ENCODE measurements at regions of chr1 and their contacts with region 1.

Region 1: GRCh38 chr1:110209715-110210603 is at the start of gene KCNC4:
- DNase-seq: peak; percentile 36
- H3K4me3 ChIP-seq: peak within 1 kb of the TSS; percentile 52
- H3K27me3 ChIP-seq: no peaks in the 10 kb centered on the region
- CTCF ChIP-seq: no peak
- polyA plus RNA-seq, gene KCNC4: 1.6 and 2.6 TPM in 2 replicates

Region 2: DNA sequence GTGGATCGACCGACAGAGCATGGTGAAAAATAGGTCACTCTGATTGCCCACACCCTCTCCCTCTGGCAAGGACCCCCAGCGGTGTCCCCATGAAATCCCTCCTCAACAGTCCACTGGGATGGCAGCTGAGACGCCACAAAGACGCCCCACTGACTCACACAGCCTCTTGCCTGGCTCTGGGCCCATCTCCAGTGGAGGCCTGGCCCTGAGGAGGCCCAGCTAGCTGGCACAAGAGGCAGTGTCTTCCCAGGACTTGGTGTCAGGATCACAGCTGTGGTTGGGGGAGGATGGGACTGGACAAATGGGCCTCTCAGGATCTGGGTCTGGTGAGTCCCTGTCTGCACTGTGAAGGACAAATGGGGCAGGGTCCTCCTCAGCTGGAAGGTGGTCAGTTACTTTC is 144.1 kb before region 1 on chr1:
- CTCF ChIA-PET with region 1: no interaction called
- POLR2A ChIA-PET with region 1: no interaction called
- DNase-seq: no peak
- H3K4me3 ChIP-seq: no peak overlapping the region
- H3K27me3 ChIP-seq: peaks cover 19% of the 10 kb centered on the region
- CTCF ChIP-seq: no peak

Region 3: GRCh38 chr1:110196917-110197765 is 12.8 kb before region 1 on chr1:
- CTCF ChIA-PET with region 1: interaction called, 31 read pairs
- POLR2A ChIA-PET with region 1: no interaction called
- DNase-seq: no peak
- H3K4me3 ChIP-seq: no peak overlapping the region
- H3K27me3 ChIP-seq: no peaks in the 10 kb centered on the region
- CTCF ChIP-seq: peak; percentile 98

Region 4: DNA sequence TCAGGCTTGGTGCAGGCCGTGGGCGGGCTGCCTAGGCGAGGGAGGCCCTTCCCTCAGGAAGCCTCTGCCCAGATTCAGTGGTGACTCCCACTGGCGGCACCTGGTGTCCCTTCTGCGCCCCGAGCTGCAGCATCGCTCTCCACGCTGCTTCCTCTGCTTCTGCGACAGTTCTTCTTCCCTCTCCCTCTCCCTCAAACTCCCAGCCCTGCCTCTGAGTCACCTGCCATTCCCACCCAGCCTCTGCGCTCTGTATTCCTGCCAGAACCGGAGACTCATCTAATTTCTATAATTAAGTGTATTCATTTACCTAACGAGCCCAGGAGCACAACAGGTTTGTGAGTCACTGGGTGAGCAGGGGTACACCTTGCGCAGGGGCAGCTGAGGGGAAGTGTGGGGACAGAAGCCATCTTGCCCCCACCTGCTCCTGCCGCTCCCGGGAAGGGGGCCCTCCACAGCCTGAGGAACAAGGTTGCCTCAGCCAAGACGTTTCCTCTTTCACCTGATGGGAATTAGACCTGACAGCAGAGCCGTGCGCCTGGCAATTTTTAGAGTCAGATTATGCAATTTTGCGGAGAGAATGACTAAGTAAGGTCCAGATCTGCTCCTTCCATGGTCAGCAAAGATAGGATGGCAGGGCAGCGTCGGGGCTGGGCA is 19.5 kb after region 1 on chr1:
- CTCF ChIA-PET with region 1: interaction called, 12 read pairs
- POLR2A ChIA-PET with region 1: no interaction called
- DNase-seq: no peak
- H3K4me3 ChIP-seq: no peak overlapping the region
- H3K27me3 ChIP-seq: no peaks in the 10 kb centered on the region
- CTCF ChIP-seq: no peak

Region 5: DNA sequence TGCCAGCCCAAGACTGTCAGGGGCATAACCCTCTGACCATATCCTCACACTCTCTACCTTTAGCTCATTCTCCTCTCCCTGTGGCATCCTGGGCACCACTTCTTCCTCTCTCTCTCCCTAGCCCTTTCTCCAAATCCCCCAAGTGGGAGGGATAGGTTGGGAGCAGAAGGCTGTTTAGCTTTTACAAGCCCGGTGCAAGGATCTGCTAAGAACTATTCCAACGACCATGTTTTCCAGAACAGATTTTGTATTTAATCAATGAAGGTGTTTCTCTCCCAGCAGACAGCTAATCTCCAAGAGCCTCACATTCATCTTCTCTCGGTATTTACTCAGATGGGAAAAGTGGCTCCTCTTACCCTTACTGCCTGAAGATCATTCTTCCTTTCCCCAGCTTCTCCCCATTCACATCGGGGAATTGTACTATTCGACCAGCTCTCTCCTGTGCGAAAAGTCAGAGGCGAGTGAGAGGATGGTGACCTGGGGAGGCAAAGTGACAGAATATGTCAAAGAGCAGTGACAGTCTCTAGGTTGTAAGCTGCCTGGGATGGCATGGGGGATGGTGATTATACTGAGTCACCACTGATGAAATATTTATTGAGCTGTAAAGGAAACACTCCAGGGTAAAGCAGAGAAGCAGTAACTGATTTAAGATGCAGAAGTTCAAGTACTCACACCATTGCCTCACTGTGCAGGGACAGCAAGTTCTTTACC is 82.2 kb after region 1 on chr1:
- CTCF ChIA-PET with region 1: interaction called, 1,014 read pairs
- POLR2A ChIA-PET with region 1: no interaction called
- DNase-seq: peak; percentile 48
- H3K4me3 ChIP-seq: no peak overlapping the region
- H3K27me3 ChIP-seq: no peaks in the 10 kb centered on the region
- CTCF ChIP-seq: no peak

Region 6: GRCh38 chr1:110319332-110320152 is 109.6 kb after region 1 on chr1:
- CTCF ChIA-PET with region 1: interaction called, 1,014 read pairs
- POLR2A ChIA-PET with region 1: no interaction called
- DNase-seq: no peak
- H3K4me3 ChIP-seq: no peak overlapping the region
- H3K27me3 ChIP-seq: no peaks in the 10 kb centered on the region
- CTCF ChIP-seq: no peak

Region 7: GRCh38 chr1:110407260-110408210 is 197.6 kb after region 1 on chr1 and contains the start of gene LAMTOR5:
- CTCF ChIA-PET with region 1: interaction called, 25 read pairs
- POLR2A ChIA-PET with region 1: interaction called, 3 read pairs
- DNase-seq: peak; percentile 68
- H3K4me3 ChIP-seq: peak within 1 kb of the TSS; percentile 99
- H3K27me3 ChIP-seq: no peaks in the 10 kb centered on the region
- CTCF ChIP-seq: no peak
- polyA plus RNA-seq, gene LAMTOR5: 236 and 261 TPM in 2 replicates

Region 8: DNA sequence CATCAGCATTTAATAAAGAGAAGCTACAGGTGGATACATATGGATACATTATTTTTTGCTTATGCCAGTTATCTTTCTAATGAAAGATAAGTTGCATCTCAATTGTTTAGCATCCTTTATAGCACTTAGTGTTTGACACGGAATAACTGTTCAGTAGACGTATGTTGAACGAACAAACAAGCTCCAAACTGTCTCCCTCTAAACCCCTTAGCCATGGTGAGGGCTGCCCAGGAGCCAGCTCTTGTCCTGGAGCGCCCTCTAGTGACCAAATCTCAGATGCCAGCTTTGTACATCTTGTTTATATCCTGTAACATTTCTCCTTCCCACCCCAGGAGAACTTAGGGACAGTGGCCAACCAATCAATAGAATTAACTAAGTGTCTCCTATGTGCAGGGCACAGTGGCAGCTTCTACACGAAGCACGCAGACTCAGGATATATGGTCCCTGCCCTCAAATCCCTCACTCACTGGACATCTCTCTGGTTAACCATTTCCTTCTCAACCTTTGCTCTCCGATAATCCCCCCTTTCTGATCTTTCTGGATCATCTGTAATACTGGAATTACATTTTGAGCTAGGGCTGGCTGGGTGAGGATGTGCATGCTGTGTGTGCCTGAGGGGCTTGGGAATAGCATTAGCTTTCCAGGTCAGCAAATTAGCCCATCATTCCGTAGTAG is 286.1 kb after region 1 on chr1:
- CTCF ChIA-PET with region 1: interaction called, 101 read pairs
- POLR2A ChIA-PET with region 1: no interaction called
- DNase-seq: peak; percentile 19
- H3K4me3 ChIP-seq: no peak overlapping the region
- H3K27me3 ChIP-seq: peaks cover 10% of the 10 kb centered on the region
- CTCF ChIP-seq: peak; percentile 95

Measured in BJ (cell line).